A549 (cell line): ENCODE measurements at regions of chr3 and their contacts with region 1.

Region 1: DNA sequence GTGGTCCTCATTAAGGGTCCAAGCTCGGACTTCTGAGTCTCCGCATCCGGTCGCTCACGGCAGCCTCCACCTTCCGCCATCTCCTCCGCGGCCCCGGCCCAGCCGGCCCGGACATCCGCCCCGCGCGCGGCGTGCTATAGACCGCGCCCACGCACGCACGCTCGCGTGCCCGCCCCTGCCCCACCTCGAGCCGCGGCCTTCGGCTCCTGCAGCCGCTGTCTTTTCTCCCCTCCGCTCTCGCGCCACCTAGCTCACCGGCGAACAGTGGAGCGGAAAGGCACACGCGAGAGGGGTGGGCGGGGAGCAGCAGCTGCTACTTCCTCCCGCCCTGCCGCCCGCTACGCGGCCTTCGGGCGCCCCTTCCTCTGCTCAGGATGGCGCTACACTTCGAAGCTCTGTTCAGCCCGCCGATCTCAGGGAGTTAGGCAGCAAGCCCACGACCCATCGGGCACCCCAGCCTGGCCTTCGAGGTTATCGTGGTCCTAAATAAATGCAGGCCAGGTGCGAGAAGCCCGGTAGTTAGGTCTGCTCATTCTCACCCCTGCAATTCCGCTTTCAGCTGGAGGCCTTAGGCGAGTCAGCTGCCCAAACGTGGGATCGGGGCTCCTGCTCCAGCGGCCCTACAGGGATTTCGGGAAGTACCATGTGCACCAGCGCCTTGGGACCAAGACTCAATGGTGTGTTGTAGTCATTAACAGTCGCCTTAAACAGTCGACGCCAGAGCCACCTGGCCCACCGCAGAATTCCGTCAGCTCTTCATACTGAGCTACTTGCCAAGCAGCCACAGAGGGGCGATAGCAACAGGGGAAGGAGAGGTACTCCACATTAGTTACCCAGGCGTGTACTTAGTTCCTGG is at the start of gene USP4:
- DNase-seq: peak; percentile 62 to 84
- ATAC-seq: peak; percentile 95 to 98
- H3K4me3 ChIP-seq: peak within 1 kb of the TSS; percentile 81
- H3K27ac ChIP-seq: peak within 1 kb of the TSS; percentile 90 to 92
- H3K4me1 ChIP-seq: peaks cover 14% of the 10 kb centered on the region; the same call in 2 of the 3 replicates
- CTCF ChIP-seq: peak; percentile 28; the same call in 2 of the 3 replicates
- EP300 ChIP-seq: no peak
- POLR2A ChIP-seq: peak; percentile 65
- RAD21 ChIP-seq: peak; percentile 33 to 44; a peak in 3 of 5 replicates
- polyA plus RNA-seq, gene USP4: 23.7 and 29.0 TPM in 2 replicates

Region 2: GRCh38 chr3:48739955-48740823 is 600.0 kb before region 1 on chr3:
- CTCF ChIA-PET with region 1: no interaction called
- POLR2A ChIA-PET with region 1: no interaction called
- DNase-seq: peak; percentile 82 to 87
- ATAC-seq: peak; percentile 96 to 98
- H3K4me3 ChIP-seq: no peak overlapping the region
- H3K27ac ChIP-seq: peak overlapping the region; percentile 82 to 86
- H3K4me1 ChIP-seq: peaks cover 20% of the 10 kb centered on the region
- CTCF ChIP-seq: peak; percentile 60
- EP300 ChIP-seq: no peak
- POLR2A ChIP-seq: no peak
- RAD21 ChIP-seq: peak; percentile 49 to 52

Region 3: DNA sequence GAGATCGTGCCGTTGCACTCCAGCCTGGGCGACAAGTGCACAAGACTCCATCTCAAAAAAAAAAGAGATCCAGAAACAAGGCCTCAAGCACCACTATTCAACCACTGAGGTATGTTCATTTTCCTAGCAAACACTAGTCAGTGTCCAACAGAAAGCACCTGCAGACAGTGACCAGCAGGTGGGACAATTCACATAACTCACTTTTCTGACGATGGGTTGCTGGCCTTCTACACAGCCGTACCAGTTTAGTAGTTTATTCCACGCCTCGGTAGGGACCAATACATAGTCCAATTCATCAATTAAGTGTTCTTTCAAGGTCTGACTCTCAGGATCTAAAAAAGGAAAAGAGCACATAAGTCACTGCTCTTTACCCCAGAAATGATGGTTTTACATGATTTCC is 12.7 kb before region 1 on chr3:
- CTCF ChIA-PET with region 1: interaction called, 10 read pairs
- POLR2A ChIA-PET with region 1: no interaction called
- DNase-seq: peak in 1 of 2 experiments; percentile 44
- ATAC-seq: peak; percentile 70 to 82; a peak in 5 of 6 replicates
- H3K4me3 ChIP-seq: no peak overlapping the region
- H3K27ac ChIP-seq: no peak overlapping the region
- H3K4me1 ChIP-seq: no peaks in the 10 kb centered on the region
- CTCF ChIP-seq: no peak
- EP300 ChIP-seq: no peak
- POLR2A ChIP-seq: no peak
- RAD21 ChIP-seq: peak in 1 of 2 experiments; percentile 23; a peak in 1 of 5 replicates

Region 4: GRCh38 chr3:49351521-49352011 is 11.4 kb after region 1 on chr3:
- CTCF ChIA-PET with region 1: interaction called, 13 read pairs
- POLR2A ChIA-PET with region 1: interaction called, 8 read pairs
- DNase-seq: peak in 1 of 2 experiments; percentile 67
- ATAC-seq: peak; percentile 69 to 78
- H3K4me3 ChIP-seq: no peak overlapping the region
- H3K27ac ChIP-seq: peak overlapping the region; percentile 53 to 83
- H3K4me1 ChIP-seq: peaks cover 37% of the 10 kb centered on the region
- CTCF ChIP-seq: no peak
- EP300 ChIP-seq: no peak
- POLR2A ChIP-seq: no peak
- RAD21 ChIP-seq: no peak

Region 5: DNA sequence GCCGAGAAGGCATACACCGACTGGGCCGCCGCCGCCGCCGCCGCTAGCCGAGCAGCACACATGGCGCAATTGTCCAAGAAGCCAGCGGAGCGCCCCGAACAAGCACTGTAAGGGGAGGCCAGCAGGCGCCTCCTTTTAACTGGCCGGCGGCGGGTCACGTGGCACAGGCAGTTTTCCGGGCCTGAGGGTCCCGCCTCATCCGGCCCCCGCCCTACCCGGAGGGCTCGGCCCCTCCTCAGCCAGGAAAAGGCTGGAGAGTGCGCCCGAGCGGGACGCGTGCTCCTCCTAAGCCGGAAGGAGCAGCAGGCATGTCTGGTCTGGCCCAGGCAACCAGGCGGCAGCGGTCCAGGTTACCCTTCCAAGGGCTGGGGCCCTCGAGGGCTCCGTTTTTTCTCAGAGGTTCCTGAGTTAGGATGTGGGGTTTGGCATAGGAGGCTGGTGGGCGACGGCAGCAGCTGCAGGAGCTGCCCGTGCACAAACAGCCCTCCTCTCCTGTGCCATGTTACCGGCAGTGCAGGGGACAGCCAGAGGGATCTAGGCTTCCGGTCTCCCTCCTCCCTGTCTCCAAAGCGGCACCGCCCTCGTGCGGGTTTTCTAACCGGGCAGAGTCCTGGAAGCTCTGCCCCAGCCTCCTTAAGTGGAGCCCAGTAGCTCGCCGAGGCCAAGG is 18.2 kb after region 1 on chr3 and contains the start of gene GPX1:
- CTCF ChIA-PET with region 1: interaction called, 13 read pairs
- POLR2A ChIA-PET with region 1: interaction called, 14 read pairs
- DNase-seq: peak; percentile 77 to 93
- ATAC-seq: peak; percentile 91 to 93
- H3K4me3 ChIP-seq: peak within 1 kb of the TSS; percentile 67
- H3K27ac ChIP-seq: peak within 1 kb of the TSS; percentile 87 to 99
- H3K4me1 ChIP-seq: peaks cover 18% of the 10 kb centered on the region; the same call in 2 of the 3 replicates
- CTCF ChIP-seq: no peak
- EP300 ChIP-seq: no peak
- POLR2A ChIP-seq: peak; percentile 57
- RAD21 ChIP-seq: no peak
- polyA plus RNA-seq, gene GPX1: 150 and 157 TPM in 2 replicates